ENCODE measurements at regions of chr9 and their contacts with region 1.

Region 1: GRCh38 chr9:72280913-72281500 is 84.0 kb downstream of the ZFAND5 start:
- DNase-seq: peak; percentile 73
- ATAC-seq: peak; percentile 96
- H3K4me3 Mint-ChIP-seq: no peak overlapping the region
- H3K27ac Mint-ChIP-seq: no peak overlapping the region
- H3K4me1 Mint-ChIP-seq: peaks cover 4% of the 10 kb centered on the region; the same call in 1 of the 2 replicates
- H3K27me3 Mint-ChIP-seq: no peaks in the 10 kb centered on the region
- CTCF ChIP-seq: peak; percentile 84

Region 2: DNA sequence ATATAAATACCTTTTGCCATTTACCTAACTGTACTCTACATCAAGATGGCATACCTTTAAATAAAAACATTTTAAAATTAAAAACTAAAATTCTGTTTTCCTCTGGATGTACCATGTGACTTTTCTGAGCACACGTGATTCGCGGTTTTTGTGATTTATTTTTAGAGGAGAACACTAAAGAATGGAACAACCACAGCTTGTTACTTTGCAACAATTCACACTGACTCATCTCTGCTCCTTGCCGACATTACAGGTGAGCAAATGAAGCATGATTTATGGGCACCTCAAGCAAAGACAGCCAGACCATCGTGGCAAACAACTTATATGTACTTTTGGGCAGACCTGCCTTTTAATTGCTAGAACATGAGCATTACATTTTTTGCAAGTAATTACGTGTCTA is 70.5 kb before region 1 on chr9:
- CTCF ChIA-PET with region 1: no interaction called
- POLR2A ChIA-PET with region 1: no interaction called
- DNase-seq: no peak
- ATAC-seq: no peak
- H3K4me3 Mint-ChIP-seq: no peak overlapping the region
- H3K27ac Mint-ChIP-seq: no peak overlapping the region
- H3K4me1 Mint-ChIP-seq: no peaks in the 10 kb centered on the region
- H3K27me3 Mint-ChIP-seq: no peaks in the 10 kb centered on the region
- CTCF ChIP-seq: no peak

Region 3: DNA sequence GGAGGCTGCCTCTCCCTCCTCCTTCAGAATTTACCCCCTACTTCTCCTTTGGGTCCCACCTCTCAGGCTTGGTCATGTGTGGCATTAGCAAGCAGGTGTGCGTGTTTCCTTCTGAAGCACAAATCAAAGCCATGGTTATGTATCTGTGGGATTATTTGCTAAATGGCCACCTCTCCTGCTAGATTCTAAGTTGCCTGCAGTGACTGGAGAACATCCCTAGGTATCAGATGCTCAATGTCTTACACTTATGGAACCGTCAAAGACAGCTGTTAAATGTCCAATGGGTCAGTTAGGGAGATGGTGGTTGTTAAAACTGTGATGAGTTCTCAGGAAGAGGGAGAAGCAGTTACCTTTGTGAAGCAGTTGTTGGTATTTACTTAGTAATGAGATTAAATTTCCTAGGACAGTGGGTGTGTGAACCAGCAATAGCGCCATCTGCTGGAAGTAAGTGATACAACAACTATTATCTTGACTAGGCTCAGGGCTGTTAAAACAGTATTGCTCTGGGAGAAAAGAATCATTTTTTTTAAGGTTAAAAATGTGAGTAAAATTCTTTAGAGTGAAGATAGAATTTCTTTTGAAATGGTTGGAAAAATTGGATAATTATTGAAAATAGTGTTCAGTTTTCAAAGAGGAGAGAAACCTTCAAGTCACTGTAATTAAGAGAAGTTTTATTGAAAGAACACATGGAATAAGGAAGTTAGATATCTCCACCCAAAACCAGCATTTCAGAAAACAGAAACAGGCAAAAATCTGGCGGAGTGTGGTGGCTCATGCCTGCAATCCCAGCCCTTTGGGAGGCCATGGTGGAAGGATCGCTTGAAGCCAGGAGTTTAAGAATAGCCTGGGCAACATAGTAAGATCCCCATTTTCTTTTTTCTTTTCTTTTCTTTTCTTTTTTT is 311.7 kb after region 1 on chr9:
- CTCF ChIA-PET with region 1: interaction called, 10 read pairs
- POLR2A ChIA-PET with region 1: no interaction called
- DNase-seq: no peak
- ATAC-seq: peak; percentile 78
- H3K4me3 Mint-ChIP-seq: no peak overlapping the region
- H3K27ac Mint-ChIP-seq: no peak overlapping the region
- H3K4me1 Mint-ChIP-seq: peaks cover 18% of the 10 kb centered on the region
- H3K27me3 Mint-ChIP-seq: no peaks in the 10 kb centered on the region; the same call in 1 of the 2 replicates
- CTCF ChIP-seq: peak; percentile 86

Region 4: DNA sequence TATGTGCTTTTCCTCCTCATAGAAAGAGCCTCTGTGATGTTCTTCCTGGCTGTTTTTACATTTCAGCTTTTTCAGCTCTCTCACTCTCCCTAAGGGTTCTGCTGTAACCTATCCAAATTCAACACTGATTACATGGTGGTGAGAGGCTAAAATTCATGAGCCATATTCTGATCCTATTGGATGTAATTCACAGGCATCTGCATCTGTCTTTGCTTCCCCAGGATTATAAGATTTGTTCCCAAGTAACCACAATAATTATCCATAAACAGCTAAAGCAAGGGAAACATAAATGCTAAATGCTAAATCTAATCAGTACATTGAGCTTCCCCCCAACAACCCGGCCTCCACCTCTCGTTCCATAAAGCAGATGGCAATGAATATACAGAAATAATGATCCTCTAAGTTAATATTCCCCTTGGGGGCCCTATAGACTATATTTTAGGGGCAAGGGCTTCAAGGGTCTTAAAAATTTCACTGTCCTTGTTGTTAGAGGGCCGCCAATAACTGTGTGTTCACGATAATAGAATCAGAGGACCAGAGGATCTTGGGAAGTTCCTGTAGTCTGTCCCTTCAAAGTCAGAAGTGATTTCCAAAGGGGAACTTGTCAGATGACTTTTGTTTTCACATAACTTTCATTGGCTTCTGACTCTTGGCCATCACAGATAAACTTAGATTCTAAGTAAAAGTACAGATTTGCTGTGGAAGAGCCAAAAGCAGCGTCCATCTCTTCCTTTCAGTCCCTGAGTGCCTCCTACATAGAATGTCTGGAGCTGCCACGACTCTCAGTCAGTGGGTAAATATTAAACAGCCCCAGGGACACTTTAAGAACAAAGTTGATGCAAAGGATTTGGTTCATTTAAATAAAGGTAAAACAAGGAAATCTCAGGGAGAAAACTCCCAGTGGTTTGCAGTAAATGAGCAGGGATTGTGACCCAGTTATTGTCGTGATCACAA is 546.3 kb after region 1 on chr9:
- CTCF ChIA-PET with region 1: interaction called, 25 read pairs
- POLR2A ChIA-PET with region 1: no interaction called
- DNase-seq: no peak
- ATAC-seq: no peak
- H3K4me3 Mint-ChIP-seq: no peak overlapping the region
- H3K27ac Mint-ChIP-seq: no peak overlapping the region
- H3K4me1 Mint-ChIP-seq: peaks cover 9% of the 10 kb centered on the region; the same call in 1 of the 2 replicates
- H3K27me3 Mint-ChIP-seq: no peaks in the 10 kb centered on the region
- CTCF ChIP-seq: no peak

Region 5: GRCh38 chr9:72843520-72844439 is 562.8 kb after region 1 on chr9:
- CTCF ChIA-PET with region 1: interaction called, 19 read pairs
- POLR2A ChIA-PET with region 1: no interaction called
- DNase-seq: peak; percentile 34
- ATAC-seq: peak; percentile 100
- H3K4me3 Mint-ChIP-seq: no peak overlapping the region
- H3K27ac Mint-ChIP-seq: no peak overlapping the region
- H3K4me1 Mint-ChIP-seq: peaks cover 15% of the 10 kb centered on the region
- H3K27me3 Mint-ChIP-seq: no peaks in the 10 kb centered on the region; the same call in 1 of the 2 replicates
- CTCF ChIP-seq: no peak